ENCODE measurements at regions of chr5 and their contacts with region 1.

Region 1: GRCh38 chr5:82165740-82166530 is 112.2 kb downstream of the RPS23 start:
- DNase-seq: peak; percentile 74 to 90 (median 84)
- H3K4me3 ChIP-seq: no peak overlapping the region
- H3K27ac ChIP-seq: peak overlapping the region in 1 of 5 donors; percentile 10
- H3K4me1 ChIP-seq: peaks cover 0 to 13% of the 10 kb centered on the region in 2 donors
- H3K27me3 ChIP-seq: no peaks in the 10 kb centered on the region
- CTCF ChIP-seq: peak; percentile 45 to 96 (median 86)
- POLR2A ChIP-seq: no peak

Region 2: DNA sequence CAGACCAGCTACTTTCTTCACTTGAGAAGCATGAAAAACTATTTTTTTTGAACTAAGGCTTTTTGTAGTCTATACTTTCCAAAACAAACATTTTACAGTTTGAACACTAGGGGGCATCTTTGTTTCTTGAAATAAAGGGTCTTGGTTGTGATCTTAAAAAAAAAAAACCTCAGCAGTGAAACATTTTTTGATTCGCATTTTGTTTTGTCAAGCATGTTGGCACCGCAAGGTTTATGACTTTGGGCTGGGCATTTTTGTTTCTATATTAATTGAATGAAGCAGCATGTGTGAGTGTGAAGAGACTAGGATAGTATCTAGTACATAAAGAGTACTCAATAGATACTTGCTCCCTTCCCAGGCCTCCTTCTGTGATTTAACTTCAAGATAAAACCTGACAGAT is 740.4 kb before region 1 on chr5:
- intact Hi-C with region 1: loop called in 1 of 2 experiments (anchors 5 kb)
- DNase-seq: no peak
- H3K4me3 ChIP-seq: no peak overlapping the region
- H3K27ac ChIP-seq: peak overlapping the region in 1 of 5 donors; percentile 5
- H3K4me1 ChIP-seq: no peaks in the 10 kb centered on the region
- H3K27me3 ChIP-seq: no peaks in the 10 kb centered on the region
- CTCF ChIP-seq: peak; percentile 39 to 74 (median 60)
- POLR2A ChIP-seq: no peak

Region 3: GRCh38 chr5:82396871-82397514 is 231.1 kb after region 1 on chr5:
- intact Hi-C with region 1: no loop called
- DNase-seq: peak; percentile 76 to 92 (median 82)
- H3K4me3 ChIP-seq: no peak overlapping the region
- H3K27ac ChIP-seq: peak overlapping the region in 2 of 5 donors; percentile 68 to 74
- H3K4me1 ChIP-seq: peaks cover 0 to 6% of the 10 kb centered on the region in 2 donors
- H3K27me3 ChIP-seq: no peaks in the 10 kb centered on the region
- CTCF ChIP-seq: no peak
- POLR2A ChIP-seq: no peak